IMR-90 (cell line): ENCODE measurements at regions of chr5 and their contacts with region 1.

Region 1: GRCh38 chr5:119355685-119356611 is at the start of gene TNFAIP8:
- DNase-seq: peak; percentile 70
- ATAC-seq: peak; percentile 78
- H3K4me3 ChIP-seq: peak within 1 kb of the TSS; percentile 74
- H3K27ac ChIP-seq: peak within 1 kb of the TSS; percentile 88
- H3K4me1 ChIP-seq: peaks cover 14% of the 10 kb centered on the region
- H3K27me3 ChIP-seq: no peaks in the 10 kb centered on the region
- CTCF ChIP-seq: no peak
- POLR2A ChIP-seq: no peak
- RAD21 ChIP-seq: no peak
- total RNA-seq, gene TNFAIP8: 29.9 and 42.5 TPM in 2 replicates

Region 2: GRCh38 chr5:118987988-118988865 is 367.7 kb before region 1 on chr5 and contains the start of gene DTWD2:
- CTCF ChIA-PET with region 1: no interaction called
- POLR2A ChIA-PET with region 1: no interaction called
- dilution Hi-C with region 1: no loop called
- in situ Hi-C with region 1: no loop called
- intact Hi-C with region 1: loop called (anchors 5 kb)
- DNase-seq: peak; percentile 88
- ATAC-seq: peak; percentile 98
- H3K4me3 ChIP-seq: peak within 1 kb of the TSS; percentile 66
- H3K27ac ChIP-seq: peak within 1 kb of the TSS; percentile 66
- H3K4me1 ChIP-seq: no peaks in the 10 kb centered on the region
- H3K27me3 ChIP-seq: no peaks in the 10 kb centered on the region
- CTCF ChIP-seq: peak; percentile 93
- POLR2A ChIP-seq: no peak
- RAD21 ChIP-seq: peak; percentile 82
- total RNA-seq, gene DTWD2: 1.8 and 2.5 TPM in 2 replicates

Region 3: GRCh38 chr5:119389288-119390030 is 33.5 kb after region 1 on chr5:
- CTCF ChIA-PET with region 1: no interaction called
- POLR2A ChIA-PET with region 1: no interaction called
- dilution Hi-C with region 1: no loop called
- in situ Hi-C with region 1: no loop called
- intact Hi-C with region 1: loop called (anchors 5 kb)
- DNase-seq: peak; percentile 48
- ATAC-seq: peak; percentile 76
- H3K4me3 ChIP-seq: no peak overlapping the region; the same call in 1 of the 2 replicates
- H3K27ac ChIP-seq: peak overlapping the region; percentile 50; the same call in 1 of the 2 replicates
- H3K4me1 ChIP-seq: peaks cover 6% of the 10 kb centered on the region
- H3K27me3 ChIP-seq: no peaks in the 10 kb centered on the region
- CTCF ChIP-seq: no peak
- POLR2A ChIP-seq: no peak
- RAD21 ChIP-seq: no peak